WTC11 (cell line): ENCODE measurements at regions of chr15 and their contacts with region 1.

Region 1: DNA sequence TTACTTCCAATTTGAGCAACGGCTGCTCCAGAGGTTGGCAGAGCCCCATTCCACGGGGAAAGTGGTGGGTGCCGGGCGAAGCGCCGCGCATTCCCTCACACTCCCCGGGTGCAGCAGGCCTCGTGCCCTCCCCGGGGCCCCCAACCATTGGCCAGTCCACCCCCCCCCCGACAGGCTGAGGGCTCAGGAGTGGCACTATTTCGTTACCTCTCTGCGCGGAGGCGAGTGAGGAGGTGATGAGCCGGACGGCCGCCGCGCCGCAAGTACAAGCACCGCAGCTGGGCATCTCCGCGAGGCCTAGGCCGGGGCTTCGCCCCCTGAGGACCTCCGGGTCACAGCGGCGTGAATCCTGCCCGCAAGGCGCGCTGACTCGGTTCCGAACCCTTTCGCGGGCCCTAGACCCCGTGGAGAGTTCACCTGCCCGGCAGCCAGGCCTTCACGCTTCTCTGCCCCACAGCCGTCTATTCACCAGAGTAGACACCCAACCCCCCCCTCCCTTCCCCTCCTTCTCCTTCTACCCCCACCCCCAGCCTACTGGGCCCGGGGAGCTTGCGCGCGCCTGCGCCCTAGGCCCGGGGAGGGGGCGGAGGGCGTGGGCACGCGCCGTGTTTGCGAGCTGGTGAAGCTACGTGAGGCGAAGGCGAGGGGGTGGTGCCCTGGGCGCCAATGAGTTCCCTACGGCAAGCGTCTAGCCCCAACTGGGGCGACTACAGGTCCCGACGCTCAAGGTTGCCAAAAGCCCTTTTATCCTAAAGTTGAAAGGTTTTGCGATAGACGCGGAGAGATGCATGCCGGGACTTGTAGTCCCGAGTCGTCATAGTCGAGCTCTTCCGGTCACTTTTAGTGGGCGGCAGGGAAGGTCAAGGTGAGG is at the start of gene CLPX:
- DNase-seq: peak; percentile 86
- ATAC-seq: peak; percentile 88
- H3K4me3 Mint-ChIP-seq: peak within 1 kb of the TSS; percentile 96
- H3K27ac Mint-ChIP-seq: peak within 1 kb of the TSS; percentile 95
- H3K4me1 Mint-ChIP-seq: peaks cover 17% of the 10 kb centered on the region
- H3K27me3 Mint-ChIP-seq: no peaks in the 10 kb centered on the region
- CTCF ChIP-seq: no peak
- total RNA-seq, gene CLPX: 57.9 to 68.7 TPM (median 61.5 TPM) in 3 replicates

Region 2: GRCh38 chr15:64640146-64640871 is 544.8 kb before region 1 on chr15:
- CTCF ChIA-PET with region 1: no interaction called
- POLR2A ChIA-PET with region 1: no interaction called
- DNase-seq: no peak
- ATAC-seq: no peak
- H3K4me3 Mint-ChIP-seq: no peak overlapping the region
- H3K27ac Mint-ChIP-seq: peak overlapping the region; percentile 77
- H3K4me1 Mint-ChIP-seq: peaks cover 34% of the 10 kb centered on the region
- H3K27me3 Mint-ChIP-seq: no peaks in the 10 kb centered on the region
- CTCF ChIP-seq: no peak

Region 3: GRCh38 chr15:65275728-65276126 is 90.6 kb after region 1 on chr15:
- CTCF ChIA-PET with region 1: interaction called, 23 read pairs
- POLR2A ChIA-PET with region 1: interaction called, 4 read pairs
- DNase-seq: no peak
- ATAC-seq: no peak
- H3K4me3 Mint-ChIP-seq: no peak overlapping the region
- H3K27ac Mint-ChIP-seq: no peak overlapping the region; the same call in 1 of the 2 replicates
- H3K4me1 Mint-ChIP-seq: peaks cover 7% of the 10 kb centered on the region; the same call in 1 of the 2 replicates
- H3K27me3 Mint-ChIP-seq: no peaks in the 10 kb centered on the region
- CTCF ChIP-seq: no peak

Region 4: DNA sequence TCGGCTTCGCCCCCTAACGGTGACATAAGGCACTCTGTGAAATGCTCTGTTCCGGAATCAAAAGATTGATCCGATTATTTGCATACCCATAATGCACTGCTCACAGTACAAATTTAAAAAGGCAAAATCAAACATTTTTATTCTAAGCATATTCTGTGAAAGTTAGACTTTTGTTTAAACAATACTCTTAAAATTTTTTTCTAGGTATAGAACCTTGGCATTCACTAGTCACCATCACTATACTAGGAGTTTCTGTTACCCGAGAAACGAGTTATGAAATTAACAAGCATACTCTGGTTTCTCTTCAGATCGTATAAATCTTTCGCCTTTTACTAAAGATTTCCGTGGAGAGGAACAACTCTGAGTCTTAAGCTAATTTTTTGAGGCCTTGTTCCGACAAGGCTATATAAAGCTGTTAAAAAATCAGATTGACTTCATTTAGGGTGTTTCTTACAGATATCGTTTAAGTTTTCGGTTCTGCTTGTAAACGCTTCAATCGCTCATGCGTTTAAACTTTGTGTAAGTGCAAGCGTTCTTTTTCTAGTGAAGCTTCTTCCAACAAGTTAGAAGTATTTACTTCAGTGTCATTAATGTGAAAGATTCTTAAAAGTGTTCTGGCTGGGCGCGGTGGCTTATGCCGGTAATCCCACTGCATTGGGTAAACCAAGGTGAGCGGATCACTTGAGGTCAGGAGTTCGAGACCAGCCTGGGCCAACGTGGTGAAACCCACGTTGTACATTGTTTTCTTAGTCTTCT is 119.5 kb after region 1 on chr15 and contains the start of gene RNU5B-1:
- CTCF ChIA-PET with region 1: interaction called, 5 read pairs
- POLR2A ChIA-PET with region 1: interaction called, 12 read pairs
- DNase-seq: peak; percentile 64
- ATAC-seq: peak; percentile 75
- H3K4me3 Mint-ChIP-seq: peak within 1 kb of the TSS; percentile 81
- H3K27ac Mint-ChIP-seq: peak within 1 kb of the TSS; percentile 99
- H3K4me1 Mint-ChIP-seq: peaks cover 24% of the 10 kb centered on the region
- H3K27me3 Mint-ChIP-seq: no peaks in the 10 kb centered on the region
- CTCF ChIP-seq: no peak
- total RNA-seq, gene RNU5B-1: 9.7 to 10.4 TPM in 2 of 3 replicates, not detected in the other